ENCODE measurements at regions of chr11 and their contacts with region 1.

Region 1: DNA sequence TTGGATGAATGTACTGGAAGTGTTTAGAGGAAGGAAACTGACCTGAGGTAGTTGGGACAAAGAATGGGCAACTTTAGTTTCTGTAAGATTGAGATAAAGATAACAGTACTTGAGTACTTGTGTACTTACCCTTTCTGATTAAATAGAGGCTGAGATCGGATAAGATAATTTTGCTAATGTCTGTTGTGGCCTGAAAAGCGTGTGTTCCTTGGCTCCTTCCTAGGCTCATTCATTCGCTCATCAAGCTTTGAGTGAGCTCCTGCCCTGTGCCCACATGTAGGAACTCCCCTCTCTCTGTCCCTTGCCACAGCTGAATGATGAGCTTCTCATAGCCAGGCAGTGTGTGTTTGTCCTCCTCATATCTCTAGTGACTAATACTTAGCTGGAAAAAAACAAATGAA is 118.2 kb downstream of the DBX1 start:
- DNase-seq: no peak
- H3K4me3 Mint-ChIP-seq: no peak overlapping the region
- H3K27ac Mint-ChIP-seq: no peak overlapping the region
- H3K4me1 Mint-ChIP-seq: no peaks in the 10 kb centered on the region
- H3K27me3 Mint-ChIP-seq: peaks cover 4% of the 10 kb centered on the region

Region 2: DNA sequence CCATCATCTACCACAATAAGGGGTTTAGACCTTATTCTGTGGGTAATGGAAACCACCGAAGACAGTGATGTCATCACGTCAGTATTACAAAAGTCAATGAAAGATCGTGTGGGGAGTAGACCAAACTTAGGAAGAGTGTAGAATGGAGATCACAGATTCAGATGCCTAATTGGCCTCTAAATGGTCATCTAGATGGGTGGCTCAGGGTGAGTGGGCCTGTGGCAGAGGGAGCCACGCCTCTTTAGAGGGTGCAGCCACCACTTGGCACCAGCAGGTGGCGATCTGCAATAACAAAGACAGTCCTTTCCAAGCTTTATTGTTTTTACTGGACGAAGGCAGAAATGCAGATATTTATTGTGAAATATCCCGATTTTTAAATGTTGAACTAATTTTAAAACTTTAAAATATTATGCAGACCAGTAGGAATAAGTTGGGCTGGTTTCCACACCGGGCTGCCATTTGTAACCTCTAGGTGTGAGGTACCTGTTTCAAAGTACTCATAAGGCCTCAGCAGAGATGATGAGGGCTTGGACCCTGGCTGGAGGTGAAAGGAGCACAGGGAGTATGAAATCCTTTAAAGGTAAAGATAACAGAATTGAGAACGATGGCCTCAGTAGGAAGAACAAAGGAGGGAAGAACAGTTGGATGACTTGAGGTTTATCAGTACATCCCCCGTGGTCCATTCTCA is 103.8 kb before region 1 on chr11:
- CTCF ChIA-PET with region 1: no interaction called
- intact Hi-C with region 1: no loop called
- DNase-seq: peak; percentile 52
- H3K4me3 Mint-ChIP-seq: no peak overlapping the region
- H3K27ac Mint-ChIP-seq: no peak overlapping the region
- H3K4me1 Mint-ChIP-seq: no peaks in the 10 kb centered on the region
- H3K27me3 Mint-ChIP-seq: peaks cover 4% of the 10 kb centered on the region

Region 3: DNA sequence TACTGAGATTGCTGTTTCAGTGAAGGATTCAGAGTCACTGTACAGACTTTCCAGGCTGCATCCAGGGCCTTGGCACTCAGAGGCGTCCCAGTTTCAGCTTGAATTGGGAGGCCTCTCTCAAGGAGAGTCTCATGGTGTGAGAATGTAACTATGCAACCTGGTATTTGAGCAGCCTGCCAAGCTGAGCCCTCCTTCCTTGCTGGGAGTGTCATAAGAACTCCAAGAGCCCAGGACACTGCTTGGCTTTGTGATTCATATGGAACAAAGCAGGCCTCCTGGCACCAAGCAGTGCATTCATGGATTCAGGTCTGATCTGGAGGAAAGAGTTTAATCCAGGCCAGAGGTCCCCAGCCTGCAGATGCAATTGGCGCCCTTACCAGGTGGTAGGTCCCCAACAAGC is 53.5 kb before region 1 on chr11:
- CTCF ChIA-PET with region 1: no interaction called
- intact Hi-C with region 1: loop called (anchors 10 kb)
- DNase-seq: no peak
- H3K4me3 Mint-ChIP-seq: no peak overlapping the region
- H3K27ac Mint-ChIP-seq: no peak overlapping the region
- H3K4me1 Mint-ChIP-seq: no peaks in the 10 kb centered on the region
- H3K27me3 Mint-ChIP-seq: peaks cover 7% of the 10 kb centered on the region

Measured in activated naive CD4-positive, alpha-beta T cell treated with anti-CD3 and anti-CD28 coated beads for 36 hours (primary cell).